ENCODE measurements at regions of chr12 and their contacts with region 1.

Region 1: DNA sequence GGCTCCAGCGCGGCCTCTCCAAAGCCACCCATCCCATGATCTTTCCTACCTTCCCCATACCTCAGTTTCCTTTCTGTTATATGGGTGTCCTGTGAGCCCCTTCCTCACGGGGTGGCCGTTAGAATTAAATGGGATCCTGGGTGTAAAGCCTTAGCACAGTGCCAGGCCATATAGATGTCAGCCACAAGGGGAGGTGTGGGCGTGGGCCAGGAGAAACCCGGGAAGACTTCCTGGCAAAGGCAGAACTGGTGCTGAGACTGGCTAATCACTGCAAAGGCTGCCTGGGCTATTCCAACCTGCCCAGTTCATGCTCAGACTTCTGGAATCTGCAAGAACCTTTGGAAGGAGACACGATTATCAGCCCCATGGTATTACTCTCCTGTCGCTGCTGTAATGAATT is 11.0 kb upstream of the NCOR2 start:
- DNase-seq: no peak
- ATAC-seq: no peak
- H3K4me3 ChIP-seq: no peak overlapping the region
- H3K27ac ChIP-seq: no peak overlapping the region
- H3K4me1 ChIP-seq: peaks cover 0 to 11% (median 7%) of the 10 kb centered on the region in 12 donors
- H3K27me3 ChIP-seq: no peaks in the 10 kb centered on the region
- CTCF ChIP-seq: no peak
- POLR2A ChIP-seq: no peak

Region 2: DNA sequence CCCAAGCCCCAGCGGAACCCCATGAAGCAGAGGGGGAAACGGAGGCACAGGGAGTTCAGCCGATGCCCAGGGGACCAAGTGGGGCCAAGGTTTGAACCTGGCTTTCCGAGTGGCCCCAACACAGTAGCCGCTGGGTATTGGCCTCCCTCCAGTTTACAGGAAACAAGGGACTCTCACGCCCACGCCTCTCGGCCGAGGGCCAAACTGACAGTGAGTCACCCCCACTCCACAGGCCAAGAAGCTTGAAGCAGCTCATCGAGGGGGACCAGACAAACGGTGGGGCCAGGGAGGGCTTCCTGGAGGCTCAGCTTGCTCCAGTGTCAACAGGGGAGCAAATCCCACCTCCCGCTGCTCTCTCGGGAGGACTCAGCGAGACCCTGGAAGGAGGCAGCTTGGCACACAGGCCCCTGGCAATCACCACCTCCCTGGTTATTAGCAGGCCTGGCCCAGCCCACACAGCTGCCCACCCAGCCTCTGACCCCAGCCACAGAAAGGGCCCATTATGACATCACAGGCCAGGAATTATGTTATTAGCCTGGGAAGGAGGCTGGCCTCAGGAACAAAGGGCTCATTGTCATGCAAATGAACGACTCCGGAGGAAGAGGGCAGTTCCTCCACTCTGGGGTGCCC is 65.7 kb before region 1 on chr12:
- intact Hi-C with region 1: no loop called
- DNase-seq: peak; percentile 85 to 94 (median 90)
- ATAC-seq: peak in 3 of 4 donors; percentile 13 to 53 (median 43)
- H3K4me3 ChIP-seq: no peak overlapping the region
- H3K27ac ChIP-seq: peak overlapping the region; percentile 19 to 83 (median 68)
- H3K4me1 ChIP-seq: peaks cover 14 to 99% (median 87%) of the 10 kb centered on the region in 12 donors
- H3K27me3 ChIP-seq: no peaks in the 10 kb centered on the region
- CTCF ChIP-seq: no peak
- POLR2A ChIP-seq: no peak

Region 3: GRCh38 chr12:124620751-124621660 is 42.6 kb after region 1 on chr12:
- intact Hi-C with region 1: loop called in 3 of 10 experiments (anchors 5 to 10 kb)
- DNase-seq: peak; percentile 49 to 85 (median 80)
- ATAC-seq: peak; percentile 52 to 79 (median 56)
- H3K4me3 ChIP-seq: no peak overlapping the region
- H3K27ac ChIP-seq: peak overlapping the region in 10 of 12 donors; percentile 6 to 65 (median 44)
- H3K4me1 ChIP-seq: peaks cover 3 to 41% (median 25%) of the 10 kb centered on the region in 12 donors
- H3K27me3 ChIP-seq: no peaks in the 10 kb centered on the region
- CTCF ChIP-seq: no peak
- POLR2A ChIP-seq: no peak

Region 4: DNA sequence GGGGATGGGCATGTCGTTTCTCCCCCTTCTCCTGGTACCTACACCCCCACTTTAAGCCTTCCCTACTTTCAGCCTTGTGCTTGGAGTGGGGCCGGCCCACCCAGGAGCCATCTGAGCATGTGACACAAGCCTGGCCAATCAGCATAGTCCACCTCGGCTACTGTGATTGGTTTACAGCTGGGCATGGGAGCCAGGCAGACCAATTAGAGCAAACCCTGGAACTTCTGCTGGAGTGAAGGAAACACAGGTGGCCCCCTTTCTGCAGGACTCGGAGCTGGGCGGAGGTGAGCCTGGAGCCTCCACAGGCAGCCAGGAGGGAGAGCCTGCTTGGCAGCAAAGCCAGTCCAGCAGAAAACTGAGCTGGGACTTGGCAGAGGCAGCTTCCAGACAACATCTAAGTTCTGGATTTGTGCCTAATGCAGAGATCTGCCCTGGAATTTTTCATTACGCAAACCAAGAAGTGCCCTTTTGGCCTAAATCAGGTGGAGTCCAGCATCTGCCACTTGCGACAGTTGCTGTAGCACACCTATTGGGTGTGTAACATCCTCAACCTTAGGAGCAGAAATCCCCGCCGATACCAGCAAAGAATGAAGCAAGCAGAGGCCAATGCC is 225.7 kb after region 1 on chr12:
- intact Hi-C with region 1: no loop called
- DNase-seq: no peak
- ATAC-seq: peak; percentile 51 to 68 (median 64)
- H3K4me3 ChIP-seq: no peak overlapping the region
- H3K27ac ChIP-seq: peak overlapping the region in 1 of 12 donors; percentile 14
- H3K4me1 ChIP-seq: peaks cover 0 to 6% (median 0%) of the 10 kb centered on the region in 12 donors
- H3K27me3 ChIP-seq: no peaks in the 10 kb centered on the region
- CTCF ChIP-seq: no peak
- POLR2A ChIP-seq: no peak